ENCODE measurements at regions of chr15 and their contacts with region 1.

Region 1: GRCh38 chr15:51888593-51889195 is 59.2 kb downstream of the TMOD3 start:
- DNase-seq: peak in 2 of 9 experiments; percentile 20 to 41
- ATAC-seq: no peak
- H3K4me3 ChIP-seq: no peak overlapping the region
- H3K4me3 Mint-ChIP-seq: no peak overlapping the region
- H3K27ac ChIP-seq: no peak overlapping the region
- H3K27ac Mint-ChIP-seq: peak overlapping the region; percentile 21
- H3K4me1 ChIP-seq: no peaks in the 10 kb centered on the region
- H3K4me1 Mint-ChIP-seq: peaks cover 10% of the 10 kb centered on the region
- H3K27me3 ChIP-seq: no peaks in the 10 kb centered on the region
- H3K27me3 Mint-ChIP-seq: no peaks in the 10 kb centered on the region
- CTCF ChIP-seq: peak; percentile 96

Region 2: DNA sequence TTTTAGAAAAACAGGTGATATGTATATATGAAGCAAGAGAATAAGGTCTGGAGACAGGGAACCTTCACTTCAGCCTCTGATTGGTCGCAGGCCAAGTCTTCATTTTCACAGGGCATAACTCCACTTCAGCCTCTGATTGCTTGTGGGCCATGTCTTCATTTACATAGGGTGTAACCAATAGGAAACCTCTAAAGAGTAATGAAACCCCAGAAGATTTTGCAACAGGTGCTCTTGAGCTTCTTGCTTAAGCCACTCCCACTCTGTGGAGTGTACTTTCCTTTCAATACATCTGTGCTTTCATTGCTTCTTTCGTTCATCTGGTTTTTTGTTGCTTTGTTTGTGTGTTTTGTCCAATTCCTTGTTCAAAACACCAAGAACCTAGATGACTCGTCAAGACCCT is 230.0 kb before region 1 on chr15:
- CTCF ChIA-PET with region 1: no interaction called
- POLR2A ChIA-PET with region 1: no interaction called
- intact Hi-C with region 1: loop called in 1 of 2 experiments (anchors 5 kb)
- DNase-seq: no peak
- ATAC-seq: no peak
- H3K4me3 ChIP-seq: no peak overlapping the region
- H3K4me3 Mint-ChIP-seq: no peak overlapping the region
- H3K27ac ChIP-seq: no peak overlapping the region
- H3K27ac Mint-ChIP-seq: no peak overlapping the region
- H3K4me1 ChIP-seq: no peaks in the 10 kb centered on the region
- H3K4me1 Mint-ChIP-seq: no peaks in the 10 kb centered on the region
- H3K27me3 ChIP-seq: no peaks in the 10 kb centered on the region
- H3K27me3 Mint-ChIP-seq: no peaks in the 10 kb centered on the region
- CTCF ChIP-seq: no peak

Region 3: GRCh38 chr15:51874751-51875528 is 13.8 kb before region 1 on chr15:
- CTCF ChIA-PET with region 1: interaction called, 12 read pairs
- POLR2A ChIA-PET with region 1: no interaction called
- intact Hi-C with region 1: no loop called
- DNase-seq: no peak
- ATAC-seq: no peak
- H3K4me3 ChIP-seq: no peak overlapping the region
- H3K4me3 Mint-ChIP-seq: no peak overlapping the region
- H3K27ac ChIP-seq: no peak overlapping the region
- H3K27ac Mint-ChIP-seq: no peak overlapping the region
- H3K4me1 ChIP-seq: no peaks in the 10 kb centered on the region
- H3K4me1 Mint-ChIP-seq: peaks cover 21% of the 10 kb centered on the region
- H3K27me3 ChIP-seq: no peaks in the 10 kb centered on the region
- H3K27me3 Mint-ChIP-seq: no peaks in the 10 kb centered on the region
- CTCF ChIP-seq: no peak

Measured in CD8-positive, alpha-beta T cell (primary cell).